Activated CD4-positive, alpha-beta memory T cell treated with anti-CD3 and anti-CD28 coated beads for 36 hours (primary cell): ENCODE measurements at regions of chr11 and their contacts with region 1.

Region 1: DNA sequence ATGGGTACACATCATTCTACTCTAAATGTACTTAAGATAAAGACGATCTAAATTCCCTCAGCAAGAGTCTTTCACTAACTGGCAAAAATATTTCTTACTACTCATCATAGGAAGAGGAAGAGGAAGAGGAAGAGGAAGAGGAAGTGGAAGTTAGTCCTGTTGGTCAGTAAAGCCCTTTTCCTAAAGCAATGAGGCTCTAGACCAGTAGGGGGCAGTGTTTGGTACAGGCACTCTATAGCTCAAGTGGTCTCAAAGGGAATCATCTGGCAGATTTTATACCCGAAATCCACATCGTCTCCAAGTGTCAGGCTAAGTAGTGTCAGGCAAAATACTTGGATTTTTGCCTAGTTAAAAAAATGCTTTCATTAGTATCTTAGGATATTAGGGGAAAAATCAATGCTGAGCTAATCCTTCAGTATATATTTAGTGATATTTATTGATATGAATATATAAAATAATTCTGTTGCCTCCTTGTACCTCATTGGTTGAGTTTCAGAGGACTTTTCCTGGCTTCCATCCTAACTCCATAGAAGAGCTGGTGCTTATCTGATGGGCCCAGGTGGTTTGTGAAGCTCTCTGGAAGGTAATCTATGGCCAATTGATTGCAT is 7.7 kb downstream of the BLID start:
- DNase-seq: peak; percentile 11
- H3K4me3 Mint-ChIP-seq: no peak overlapping the region
- H3K27ac Mint-ChIP-seq: no peak overlapping the region
- H3K4me1 Mint-ChIP-seq: no peaks in the 10 kb centered on the region
- H3K27me3 Mint-ChIP-seq: peaks cover 11% of the 10 kb centered on the region

Region 2: DNA sequence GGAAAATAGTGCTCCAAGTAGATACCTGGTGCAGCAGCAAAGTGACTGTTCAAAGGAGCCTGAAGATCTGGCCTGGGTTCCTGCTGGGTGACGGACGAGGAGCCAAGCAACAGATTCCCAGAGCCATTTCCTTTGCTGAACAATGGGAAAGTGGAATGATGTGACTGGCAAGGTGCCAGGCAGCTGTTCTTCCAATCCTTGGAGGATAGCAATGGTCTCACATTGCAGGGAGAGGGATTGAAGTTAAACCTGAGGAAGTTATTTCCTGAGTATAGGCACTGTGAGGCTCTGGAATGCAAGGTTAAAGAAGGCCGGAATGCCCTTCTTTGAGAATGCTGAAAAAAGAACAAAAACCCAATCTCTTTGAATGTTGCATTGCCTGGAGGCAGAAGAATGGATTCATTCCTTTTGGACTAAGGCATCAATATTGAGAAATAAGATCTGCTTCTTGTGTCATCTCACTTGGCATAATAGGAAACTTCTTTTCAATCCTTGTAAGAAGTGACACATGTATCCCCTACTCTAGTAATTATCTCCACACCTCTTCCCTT is 216.1 kb before region 1 on chr11:
- CTCF ChIA-PET with region 1: no interaction called
- POLR2A ChIA-PET with region 1: no interaction called
- intact Hi-C with region 1: no loop called
- DNase-seq: no peak
- H3K4me3 Mint-ChIP-seq: no peak overlapping the region
- H3K27ac Mint-ChIP-seq: no peak overlapping the region
- H3K4me1 Mint-ChIP-seq: no peaks in the 10 kb centered on the region
- H3K27me3 Mint-ChIP-seq: no peaks in the 10 kb centered on the region

Region 3: GRCh38 chr11:122202951-122203456 is 94.7 kb after region 1 on chr11:
- CTCF ChIA-PET with region 1: interaction called, 8 read pairs
- POLR2A ChIA-PET with region 1: no interaction called
- intact Hi-C with region 1: loop called (anchors 2 kb)
- DNase-seq: peak; percentile 59
- H3K4me3 Mint-ChIP-seq: no peak overlapping the region
- H3K27ac Mint-ChIP-seq: no peak overlapping the region
- H3K4me1 Mint-ChIP-seq: no peaks in the 10 kb centered on the region
- H3K27me3 Mint-ChIP-seq: peaks cover 22% of the 10 kb centered on the region

Region 4: GRCh38 chr11:122253589-122254231 is 145.4 kb after region 1 on chr11:
- CTCF ChIA-PET with region 1: no interaction called
- POLR2A ChIA-PET with region 1: no interaction called
- intact Hi-C with region 1: no loop called
- DNase-seq: no peak
- H3K4me3 Mint-ChIP-seq: no peak overlapping the region
- H3K27ac Mint-ChIP-seq: no peak overlapping the region
- H3K4me1 Mint-ChIP-seq: no peaks in the 10 kb centered on the region
- H3K27me3 Mint-ChIP-seq: peaks cover 8% of the 10 kb centered on the region